HCT116 (cell line): ENCODE measurements at regions of chr10 and their contacts with region 1.

Region 1: GRCh38 chr10:35336084-35336831 is at the start of gene CCNY:
- DNase-seq: no peak
- ATAC-seq: peak; percentile 83
- H3K4me3 ChIP-seq: peak within 1 kb of the TSS; percentile 79 to 87
- H3K27ac ChIP-seq: peak within 1 kb of the TSS; percentile 84
- H3K4me1 ChIP-seq: peaks cover 28 to 60% of the 10 kb centered on the region in 2 experiments
- H3K27me3 ChIP-seq: no peaks in the 10 kb centered on the region
- CTCF ChIP-seq: no peak
- POLR2A ChIP-seq: peak; percentile 65
- RAD21 ChIP-seq: no peak
- total RNA-seq, gene CCNY: 62.2 TPM

Region 2: DNA sequence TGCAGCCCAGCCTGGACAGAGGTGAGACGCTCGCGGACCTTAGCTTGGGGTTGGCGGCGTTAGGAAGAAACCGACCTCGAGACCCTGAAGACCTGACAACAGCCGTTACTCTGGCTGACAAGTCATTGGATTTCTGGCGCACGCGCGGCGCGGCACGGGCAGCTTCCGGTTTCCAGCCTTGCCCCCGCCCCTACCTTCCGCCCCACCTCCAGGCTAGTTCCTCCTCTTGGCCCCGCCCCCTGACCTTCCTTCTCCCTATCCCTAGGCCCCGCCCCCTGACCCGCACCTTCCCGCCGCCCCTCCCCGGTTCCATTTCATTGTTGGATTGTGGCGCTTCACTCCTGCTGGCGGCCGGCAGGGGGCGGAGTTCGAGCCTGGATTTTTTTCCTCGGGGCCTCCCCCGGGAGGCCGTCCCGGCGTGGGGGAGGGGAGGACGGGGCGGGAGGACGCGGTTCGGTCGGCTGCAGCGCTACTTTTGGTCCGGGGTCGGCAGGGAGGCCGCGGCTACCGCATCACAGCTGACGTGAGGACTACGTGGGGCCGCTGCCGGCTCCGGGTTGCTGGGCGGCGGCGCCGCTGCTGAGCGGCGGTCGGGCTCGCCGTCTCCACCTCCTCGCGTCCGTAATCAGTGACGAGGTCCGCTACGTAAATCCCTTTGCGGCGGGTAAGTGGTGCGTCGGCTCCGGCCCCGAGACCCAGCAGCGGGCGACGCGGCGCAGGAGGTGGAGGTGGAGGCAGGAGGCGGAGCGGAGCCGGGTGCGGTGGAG is 209.5 kb before region 1 on chr10 and contains the start of gene CREM:
- CTCF ChIA-PET with region 1: no interaction called
- POLR2A ChIA-PET with region 1: no interaction called
- RAD21 ChIA-PET with region 1: no interaction called
- intact Hi-C with region 1: loop called (anchors 2 kb)
- DNase-seq: peak; percentile 90
- ATAC-seq: peak; percentile 87
- H3K4me3 ChIP-seq: peak within 1 kb of the TSS; percentile 92 to 97
- H3K27ac ChIP-seq: peak within 1 kb of the TSS; percentile 99
- H3K4me1 ChIP-seq: peaks cover 3 to 21% of the 10 kb centered on the region in 2 experiments; a peak in 3 of 4 replicates
- H3K27me3 ChIP-seq: no peaks in the 10 kb centered on the region
- CTCF ChIP-seq: peak; percentile 72 to 82 (median 75)
- POLR2A ChIP-seq: peak; percentile 84
- RAD21 ChIP-seq: peak; percentile 69
- total RNA-seq, gene CREM: 21.4 TPM

Region 3: DNA sequence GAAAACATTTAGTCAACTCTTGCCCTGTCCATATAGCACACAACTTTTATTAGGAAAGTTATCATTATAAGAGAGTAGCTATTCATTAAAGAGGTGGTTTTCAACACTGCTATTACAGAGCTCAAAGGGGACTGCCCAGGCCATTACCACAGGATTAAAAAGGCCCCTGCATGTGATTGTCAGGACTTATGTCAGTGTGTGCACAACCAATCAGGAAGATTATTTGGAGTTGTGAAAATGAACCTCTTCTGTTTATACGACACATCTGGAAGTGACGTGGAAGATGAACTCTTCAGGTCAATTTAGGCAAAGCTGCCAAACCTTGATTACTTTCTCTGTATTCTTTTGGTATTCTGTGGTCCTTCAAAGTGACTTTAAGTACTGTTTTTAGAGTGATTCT is 14.8 kb after region 1 on chr10:
- CTCF ChIA-PET with region 1: no interaction called
- POLR2A ChIA-PET with region 1: no interaction called
- RAD21 ChIA-PET with region 1: no interaction called
- intact Hi-C with region 1: loop called (anchors 2 kb)
- DNase-seq: no peak
- ATAC-seq: no peak
- H3K4me3 ChIP-seq: no peak overlapping the region
- H3K27ac ChIP-seq: no peak overlapping the region
- H3K4me1 ChIP-seq: peaks cover 13 to 14% of the 10 kb centered on the region in 2 experiments
- H3K27me3 ChIP-seq: no peaks in the 10 kb centered on the region
- CTCF ChIP-seq: no peak
- POLR2A ChIP-seq: no peak
- RAD21 ChIP-seq: no peak